CD4-positive, alpha-beta memory T cell (primary cell): ENCODE measurements at regions of chr7 and their contacts with region 1.

Region 1: GRCh38 chr7:37408291-37409228 is 40.1 kb downstream of the ELMO1 start:
- DNase-seq: peak in 4 of 5 donors; percentile 22 to 67 (median 30)
- H3K4me3 ChIP-seq: peak overlapping the region in 1 of 2 donors; percentile 45
- H3K4me3 Mint-ChIP-seq: peak overlapping the region; percentile 82 to 92 (median 88)
- H3K27ac ChIP-seq: peak overlapping the region; percentile 46
- H3K27ac Mint-ChIP-seq: peak overlapping the region; percentile 86 to 94 (median 92)
- H3K4me1 ChIP-seq: peaks cover 48% of the 10 kb centered on the region
- H3K4me1 Mint-ChIP-seq: peaks cover 48 to 77% (median 62%) of the 10 kb centered on the region in 4 donors
- H3K27me3 ChIP-seq: no peaks in the 10 kb centered on the region
- H3K27me3 Mint-ChIP-seq: no peaks in the 10 kb centered on the region

Region 2: GRCh38 chr7:37369906-37370305 is 38.7 kb before region 1 on chr7:
- CTCF ChIA-PET with region 1: no interaction called
- POLR2A ChIA-PET with region 1: interaction called, 3 read pairs
- intact Hi-C with region 1: loop called (anchors 5 kb)
- DNase-seq: no peak
- H3K4me3 ChIP-seq: no peak overlapping the region
- H3K4me3 Mint-ChIP-seq: no peak overlapping the region
- H3K27ac ChIP-seq: no peak overlapping the region
- H3K27ac Mint-ChIP-seq: peak overlapping the region in 1 of 7 donors; percentile 25
- H3K4me1 ChIP-seq: peaks cover 30% of the 10 kb centered on the region
- H3K4me1 Mint-ChIP-seq: peaks cover 34 to 54% (median 44%) of the 10 kb centered on the region in 4 donors
- H3K27me3 ChIP-seq: no peaks in the 10 kb centered on the region
- H3K27me3 Mint-ChIP-seq: no peaks in the 10 kb centered on the region

Region 3: GRCh38 chr7:37440738-37441385 is 32.3 kb after region 1 on chr7:
- CTCF ChIA-PET with region 1: interaction called, 35 read pairs
- POLR2A ChIA-PET with region 1: interaction called, 98 read pairs
- intact Hi-C with region 1: loop called (anchors 2 kb)
- DNase-seq: peak; percentile 35 to 48 (median 41)
- H3K4me3 ChIP-seq: peak overlapping the region; percentile 4 to 33
- H3K4me3 Mint-ChIP-seq: peak overlapping the region; percentile 63 to 89 (median 82)
- H3K27ac ChIP-seq: peak overlapping the region; percentile 33
- H3K27ac Mint-ChIP-seq: peak overlapping the region; percentile 88 to 98 (median 95)
- H3K4me1 ChIP-seq: peaks cover 79% of the 10 kb centered on the region
- H3K4me1 Mint-ChIP-seq: peaks cover 64 to 84% (median 72%) of the 10 kb centered on the region in 4 donors
- H3K27me3 ChIP-seq: no peaks in the 10 kb centered on the region
- H3K27me3 Mint-ChIP-seq: no peaks in the 10 kb centered on the region